ENCODE measurements at regions of chr6 and their contacts with region 1.

Region 1: DNA sequence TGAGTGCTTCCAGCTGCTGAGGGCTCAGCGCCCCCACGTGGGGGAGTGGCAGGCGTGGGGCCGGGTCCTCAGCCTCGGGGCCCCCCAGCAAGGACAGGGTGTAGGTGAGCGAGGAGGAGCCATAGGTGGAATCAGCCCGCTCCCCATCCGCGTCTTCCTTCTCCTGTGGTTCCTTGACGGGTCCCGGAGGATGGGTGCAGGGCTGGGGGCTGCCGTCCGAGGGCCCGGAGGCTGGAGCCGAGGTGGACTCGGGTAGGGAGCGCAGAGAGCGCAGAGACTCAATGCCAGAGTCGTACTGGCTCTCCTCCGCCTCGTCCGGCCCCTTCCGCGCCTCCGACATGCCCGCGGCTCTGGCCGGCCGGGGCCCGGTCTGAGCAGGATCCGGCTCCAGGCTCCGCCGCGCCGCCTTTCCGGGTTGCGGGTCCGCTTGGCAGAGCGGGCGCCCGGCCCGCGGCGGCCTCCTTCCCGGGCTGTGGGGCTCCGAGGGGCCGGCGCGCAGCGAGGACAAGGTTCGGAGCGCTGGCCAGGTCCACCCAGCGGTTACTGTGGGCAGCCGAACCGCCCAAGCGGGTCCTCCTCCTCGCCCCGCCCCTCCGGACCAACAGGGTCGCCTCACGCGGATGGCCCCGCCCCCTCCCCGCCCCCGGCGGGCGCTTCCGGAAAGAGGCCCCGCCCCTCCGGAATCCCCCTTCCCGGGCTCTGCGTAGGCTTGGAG is at the start of gene NFKBIE:
- DNase-seq: peak; percentile 94
- ATAC-seq: peak; percentile 74
- H3K4me3 Mint-ChIP-seq: peak within 1 kb of the TSS; percentile 97
- H3K27ac Mint-ChIP-seq: peak within 1 kb of the TSS; percentile 96
- H3K4me1 Mint-ChIP-seq: peaks cover 60% of the 10 kb centered on the region
- H3K27me3 Mint-ChIP-seq: peaks cover 18% of the 10 kb centered on the region
- total RNA-seq, gene NFKBIE: 24.5 to 37.7 TPM

Region 2: GRCh38 chr6:44172731-44173500 is 92.2 kb before region 1 on chr6:
- CTCF ChIA-PET with region 1: interaction called, 10 read pairs
- DNase-seq: peak; percentile 87
- ATAC-seq: peak; percentile 90
- H3K4me3 Mint-ChIP-seq: no peak overlapping the region
- H3K27ac Mint-ChIP-seq: no peak overlapping the region
- H3K4me1 Mint-ChIP-seq: peaks cover 24% of the 10 kb centered on the region
- H3K27me3 Mint-ChIP-seq: peaks cover 24% of the 10 kb centered on the region

Region 3: DNA sequence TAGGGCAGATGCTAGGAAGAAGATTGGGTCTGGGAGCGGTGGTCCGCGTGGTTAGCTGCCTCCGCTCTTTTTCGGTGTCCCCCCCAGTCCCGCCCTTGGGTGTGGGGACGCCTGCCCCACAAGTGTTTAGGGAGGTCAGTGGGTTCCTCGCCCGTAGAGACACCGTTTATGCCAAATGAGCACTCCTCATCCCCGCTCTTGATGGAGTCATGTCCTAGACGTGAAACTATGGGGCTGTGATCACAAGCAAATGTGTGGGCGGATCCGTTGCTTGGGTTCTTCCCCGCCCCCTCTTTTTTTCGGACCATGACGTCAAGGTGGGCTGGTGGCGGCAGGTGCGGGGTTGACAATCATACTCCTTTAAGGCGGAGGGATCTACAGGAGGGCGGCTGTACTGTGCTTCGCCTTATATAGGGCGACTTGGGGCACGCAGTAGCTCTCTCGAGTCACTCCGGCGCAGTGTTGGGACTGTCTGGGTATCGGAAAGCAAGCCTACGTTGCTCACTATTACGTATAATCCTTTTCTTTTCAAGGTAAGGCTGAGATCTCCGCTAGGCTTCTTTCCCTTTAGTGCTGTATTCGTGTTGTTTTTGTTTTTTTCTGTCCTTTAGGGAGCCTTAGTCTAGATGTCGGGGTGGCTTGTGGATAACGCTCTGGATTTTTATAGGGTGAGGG is 18.4 kb before region 1 on chr6 and contains the start of gene HSP90AB1:
- CTCF ChIA-PET with region 1: interaction called, 39 read pairs
- DNase-seq: peak; percentile 98
- ATAC-seq: peak; percentile 82
- H3K4me3 Mint-ChIP-seq: peak within 1 kb of the TSS; percentile 99
- H3K27ac Mint-ChIP-seq: peak within 1 kb of the TSS; percentile 99
- H3K4me1 Mint-ChIP-seq: peaks cover 52% of the 10 kb centered on the region
- H3K27me3 Mint-ChIP-seq: no peaks in the 10 kb centered on the region
- total RNA-seq, gene HSP90AB1: 734 to 1,112 TPM

Region 4: DNA sequence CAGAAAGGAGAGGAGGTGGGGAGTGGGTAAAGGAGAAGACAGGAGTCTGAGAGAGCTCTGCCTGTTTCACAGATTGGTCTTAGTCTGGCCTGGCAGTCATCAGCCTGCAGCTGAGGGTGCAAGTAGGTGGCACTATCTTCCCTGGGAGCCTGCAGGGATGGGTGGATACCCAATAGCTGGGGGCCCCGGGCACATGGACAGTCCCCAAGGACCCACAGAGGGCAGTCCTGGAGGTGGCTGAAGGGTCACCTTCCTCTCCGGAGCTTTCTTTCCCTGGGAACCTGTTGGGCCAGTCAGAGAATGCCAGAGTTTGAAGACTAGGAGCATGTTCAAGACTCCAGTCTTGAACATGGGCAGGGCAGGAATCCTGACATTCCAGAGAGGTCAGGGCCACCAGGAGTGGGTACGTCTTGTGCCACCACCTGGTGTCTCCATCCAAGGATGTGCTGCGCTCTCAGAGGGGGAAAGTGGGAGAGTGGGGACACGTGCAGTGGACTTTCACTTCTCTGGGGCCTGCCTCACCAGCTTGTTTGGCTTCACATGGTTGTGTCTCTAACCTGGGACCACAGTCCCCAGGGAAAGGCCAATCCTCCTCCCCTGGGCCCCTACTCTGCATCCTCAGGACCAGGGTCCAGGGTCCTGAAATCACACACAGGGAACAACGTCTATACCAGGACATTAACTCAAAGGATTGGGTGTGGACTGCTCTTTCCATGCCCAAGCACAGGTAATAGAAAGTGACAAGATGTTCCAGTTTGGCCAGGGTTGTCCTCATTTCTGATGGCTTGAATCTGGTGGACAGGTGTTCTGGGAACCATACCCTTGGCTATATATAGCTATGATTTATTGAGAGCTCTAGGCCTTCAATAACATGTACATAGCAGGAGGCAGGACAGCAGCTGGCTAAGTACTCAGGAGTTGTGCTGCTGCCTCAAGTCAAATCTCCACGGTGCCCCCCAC is 29.9 kb after region 1 on chr6:
- CTCF ChIA-PET with region 1: interaction called, 16 read pairs
- DNase-seq: no peak
- ATAC-seq: no peak
- H3K4me3 Mint-ChIP-seq: no peak overlapping the region
- H3K27ac Mint-ChIP-seq: no peak overlapping the region
- H3K4me1 Mint-ChIP-seq: peaks cover 3% of the 10 kb centered on the region
- H3K27me3 Mint-ChIP-seq: peaks cover 70% of the 10 kb centered on the region

Region 5: GRCh38 chr6:44312901-44313788 is 48.0 kb after region 1 on chr6 and contains the start of gene AARS2:
- CTCF ChIA-PET with region 1: interaction called, 16 read pairs
- DNase-seq: peak; percentile 93
- ATAC-seq: peak; percentile 95
- H3K4me3 Mint-ChIP-seq: peak within 1 kb of the TSS; percentile 95
- H3K27ac Mint-ChIP-seq: peak within 1 kb of the TSS; percentile 93
- H3K4me1 Mint-ChIP-seq: peaks cover 13% of the 10 kb centered on the region
- H3K27me3 Mint-ChIP-seq: peaks cover 7% of the 10 kb centered on the region
- total RNA-seq, gene AARS2: 21.1 to 23.7 TPM

Region 6: GRCh38 chr6:44580901-44581300 is 315.7 kb after region 1 on chr6:
- CTCF ChIA-PET with region 1: no interaction called
- DNase-seq: peak; percentile 19
- ATAC-seq: no peak
- H3K4me3 Mint-ChIP-seq: no peak overlapping the region
- H3K27ac Mint-ChIP-seq: no peak overlapping the region
- H3K4me1 Mint-ChIP-seq: no peaks in the 10 kb centered on the region
- H3K27me3 Mint-ChIP-seq: peaks cover 24% of the 10 kb centered on the region